ENCODE measurements at regions of chrX and their contacts with region 1.

Region 1: GRCh38 chrX:130631011-130631410 is 229.2 kb downstream of the RBMX2 start:
- DNase-seq: no peak
- H3K4me3 ChIP-seq: no peak overlapping the region
- H3K27ac ChIP-seq: no peak overlapping the region
- H3K4me1 ChIP-seq: no peaks in the 10 kb centered on the region
- H3K27me3 ChIP-seq: no peaks in the 10 kb centered on the region
- CTCF ChIP-seq: no peak

Region 2: GRCh38 chrX:130688360-130688759 is 57.3 kb after region 1 on chrX:
- CTCF ChIA-PET with region 1: no interaction called
- dilution Hi-C with region 1: loop called (anchors 5 kb)
- in situ Hi-C with region 1: no loop called
- intact Hi-C with region 1: no loop called
- DNase-seq: no peak
- H3K4me3 ChIP-seq: no peak overlapping the region
- H3K27ac ChIP-seq: no peak overlapping the region
- H3K4me1 ChIP-seq: no peaks in the 10 kb centered on the region
- H3K27me3 ChIP-seq: peaks cover 2% of the 10 kb centered on the region
- CTCF ChIP-seq: no peak

Region 3: GRCh38 chrX:130741584-130741983 is 110.6 kb after region 1 on chrX:
- CTCF ChIA-PET with region 1: no interaction called
- dilution Hi-C with region 1: no loop called
- in situ Hi-C with region 1: no loop called
- intact Hi-C with region 1: no loop called
- DNase-seq: no peak
- H3K4me3 ChIP-seq: no peak overlapping the region
- H3K27ac ChIP-seq: no peak overlapping the region
- H3K4me1 ChIP-seq: no peaks in the 10 kb centered on the region
- H3K27me3 ChIP-seq: no peaks in the 10 kb centered on the region
- CTCF ChIP-seq: no peak

Measured in mammary epithelial cell (primary cell).